IMR-90 (cell line): ENCODE measurements at regions of chr3 and their contacts with region 1.

Region 1: DNA sequence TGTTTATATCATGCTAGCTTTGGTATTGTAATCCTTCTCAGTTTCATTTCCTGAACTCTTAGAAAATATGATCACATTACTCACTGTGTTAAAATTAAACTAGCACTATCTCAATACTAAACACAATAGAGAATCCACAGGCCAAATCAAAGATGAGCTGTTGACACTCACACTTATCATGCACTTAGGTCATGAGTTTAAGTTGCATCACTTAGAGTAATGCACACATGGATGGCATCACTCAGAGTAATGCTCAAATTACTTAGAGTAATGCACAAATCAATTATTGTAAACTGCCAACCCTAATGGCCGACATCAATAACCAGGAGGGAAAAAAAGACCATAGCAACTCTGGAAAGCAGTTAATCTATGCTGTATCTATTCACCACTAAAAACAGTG is 40.0 kb upstream of the MCF2L2 start:
- DNase-seq: no peak
- ATAC-seq: no peak
- H3K4me3 ChIP-seq: no peak overlapping the region
- H3K27ac ChIP-seq: no peak overlapping the region
- H3K4me1 ChIP-seq: no peaks in the 10 kb centered on the region
- H3K27me3 ChIP-seq: peaks cover 3% of the 10 kb centered on the region
- CTCF ChIP-seq: no peak
- POLR2A ChIP-seq: no peak
- RAD21 ChIP-seq: no peak

Region 2: GRCh38 chr3:183584246-183584913 is 116.0 kb after region 1 on chr3:
- CTCF ChIA-PET with region 1: no interaction called
- POLR2A ChIA-PET with region 1: no interaction called
- dilution Hi-C with region 1: no loop called
- in situ Hi-C with region 1: no loop called
- intact Hi-C with region 1: loop called (anchors 5 kb)
- DNase-seq: peak; percentile 53
- ATAC-seq: peak; percentile 88
- H3K4me3 ChIP-seq: no peak overlapping the region
- H3K27ac ChIP-seq: peak overlapping the region; percentile 68; the same call in 1 of the 2 replicates
- H3K4me1 ChIP-seq: peaks cover 8% of the 10 kb centered on the region; the same call in 1 of the 2 replicates
- H3K27me3 ChIP-seq: peaks cover 14% of the 10 kb centered on the region
- CTCF ChIP-seq: no peak
- POLR2A ChIP-seq: no peak
- RAD21 ChIP-seq: no peak

Region 3: DNA sequence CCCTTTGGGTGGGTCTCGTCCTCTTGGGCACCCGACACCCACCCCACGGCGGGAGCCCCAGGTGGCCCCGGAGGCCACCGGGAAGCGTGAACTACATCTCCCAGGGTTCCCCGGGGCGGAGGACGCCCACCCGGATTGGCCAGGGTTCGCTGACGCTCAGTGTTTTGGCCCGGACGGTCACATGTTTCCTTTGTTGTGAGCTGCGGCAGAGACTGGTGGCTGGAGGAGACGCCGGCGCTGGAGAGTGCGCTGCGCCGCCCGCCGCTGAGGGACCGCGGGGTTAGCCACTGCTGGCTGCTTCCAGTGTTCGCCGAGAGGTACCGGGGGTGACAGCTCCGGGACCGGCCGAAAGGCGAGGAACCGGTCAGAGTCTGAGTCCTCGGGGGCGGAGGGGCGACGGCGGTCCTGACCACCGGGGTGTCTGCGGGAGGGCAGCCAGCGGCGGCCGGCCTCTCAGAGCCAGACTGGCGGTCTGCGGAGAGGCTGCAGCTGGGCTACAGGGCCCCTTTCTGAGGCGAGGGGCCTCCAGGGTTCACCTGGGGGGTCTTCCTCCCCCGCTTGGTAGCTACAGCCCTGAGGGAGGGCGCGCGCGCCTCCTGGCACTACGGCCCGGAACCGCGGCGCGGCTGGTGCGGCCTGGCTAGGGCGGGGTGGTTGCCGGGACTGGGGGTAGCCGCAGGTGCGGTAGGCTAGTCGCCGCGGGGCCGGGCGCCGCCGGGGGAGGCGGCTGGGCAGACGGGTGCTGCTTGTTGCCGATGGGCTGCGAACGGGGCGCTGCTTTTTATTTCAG is 167.2 kb after region 1 on chr3 and contains the start of gene KLHL24:
- CTCF ChIA-PET with region 1: no interaction called
- POLR2A ChIA-PET with region 1: no interaction called
- dilution Hi-C with region 1: no loop called
- in situ Hi-C with region 1: no loop called
- intact Hi-C with region 1: loop called (anchors 2 kb)
- DNase-seq: peak; percentile 91
- ATAC-seq: peak; percentile 88
- H3K4me3 ChIP-seq: peak within 1 kb of the TSS; percentile 85
- H3K27ac ChIP-seq: peak within 1 kb of the TSS; percentile 38
- H3K4me1 ChIP-seq: no peaks in the 10 kb centered on the region
- H3K27me3 ChIP-seq: no peaks in the 10 kb centered on the region
- CTCF ChIP-seq: no peak
- POLR2A ChIP-seq: peak; percentile 90
- RAD21 ChIP-seq: no peak
- total RNA-seq, gene KLHL24: 25.6 and 28.3 TPM in 2 replicates